Dorsolateral prefrontal cortex (tissue), 120 donors: ENCODE measurements at regions of chr20 and their contacts with region 1.

Region 1: GRCh38 chr20:2289471-2289872 is 6.3 kb upstream of the TGM3 start:
- DNase-seq: no peak
- H3K4me3 ChIP-seq: no peak overlapping the region
- H3K27ac ChIP-seq: no peak overlapping the region
- H3K27me3 ChIP-seq: no peaks in the 10 kb centered on the region
- CTCF ChIP-seq: no peak

Region 2: GRCh38 chr20:2151858-2152281 is 137.6 kb before region 1 on chr20:
- intact Hi-C with region 1: no loop called
- DNase-seq: no peak
- H3K4me3 ChIP-seq: no peak overlapping the region
- H3K27ac ChIP-seq: peak overlapping the region in 1 of 59 donors; percentile 3
- H3K27me3 ChIP-seq: no peaks in the 10 kb centered on the region
- CTCF ChIP-seq: no peak

Region 3: GRCh38 chr20:2224368-2224639 is 65.2 kb before region 1 on chr20:
- intact Hi-C with region 1: loop called in 1 of 2 experiments (anchors 10 kb)
- DNase-seq: no peak
- H3K4me3 ChIP-seq: no peak overlapping the region
- H3K27ac ChIP-seq: no peak overlapping the region
- H3K27me3 ChIP-seq: no peaks in the 10 kb centered on the region
- CTCF ChIP-seq: no peak